OCI-LY7 (cell line): ENCODE measurements at regions of chr6 and their contacts with region 1.

Region 1: DNA sequence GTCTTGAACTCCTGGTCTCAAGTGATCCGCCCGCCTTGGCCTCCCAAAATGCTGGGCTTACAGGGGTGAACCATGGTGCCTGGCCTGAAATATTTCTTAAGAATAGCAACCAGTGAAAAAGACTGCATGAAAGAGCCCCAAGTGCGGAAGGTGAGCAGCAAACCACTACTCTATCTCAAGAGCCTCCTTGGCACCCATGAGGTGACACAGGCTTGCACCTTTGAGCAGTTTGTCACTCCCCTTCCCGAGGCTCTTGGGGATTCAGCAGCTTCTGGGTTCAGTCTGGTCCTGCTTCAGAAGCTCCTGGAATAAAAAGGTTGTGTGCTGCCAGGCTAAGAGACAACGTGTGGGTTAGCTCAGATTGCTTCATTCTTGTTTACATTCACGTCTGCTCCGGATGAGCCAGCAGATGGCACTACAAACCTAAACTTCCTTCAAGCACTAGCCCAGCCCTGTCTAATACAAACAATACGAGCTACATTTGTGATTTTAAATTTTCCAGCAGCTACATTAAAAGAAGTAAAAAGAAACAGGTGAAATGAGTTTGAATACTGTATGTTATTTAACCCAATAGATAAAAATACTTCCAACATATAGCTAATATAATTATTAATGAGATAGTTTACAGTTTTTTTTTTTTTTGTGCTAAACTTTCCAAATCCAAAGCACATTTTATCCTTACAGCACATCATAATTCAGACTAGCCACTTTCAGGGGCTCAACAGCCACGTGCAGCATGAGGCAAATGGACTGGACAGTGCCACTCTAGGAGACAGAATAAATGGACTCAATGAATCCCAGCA is 46.2 kb downstream of the GJA10 start:
- DNase-seq: peak; percentile 71
- H3K4me3 ChIP-seq: no peak overlapping the region
- H3K27ac ChIP-seq: no peak overlapping the region
- H3K4me1 ChIP-seq: no peaks in the 10 kb centered on the region
- CTCF ChIP-seq: peak; percentile 89

Region 2: DNA sequence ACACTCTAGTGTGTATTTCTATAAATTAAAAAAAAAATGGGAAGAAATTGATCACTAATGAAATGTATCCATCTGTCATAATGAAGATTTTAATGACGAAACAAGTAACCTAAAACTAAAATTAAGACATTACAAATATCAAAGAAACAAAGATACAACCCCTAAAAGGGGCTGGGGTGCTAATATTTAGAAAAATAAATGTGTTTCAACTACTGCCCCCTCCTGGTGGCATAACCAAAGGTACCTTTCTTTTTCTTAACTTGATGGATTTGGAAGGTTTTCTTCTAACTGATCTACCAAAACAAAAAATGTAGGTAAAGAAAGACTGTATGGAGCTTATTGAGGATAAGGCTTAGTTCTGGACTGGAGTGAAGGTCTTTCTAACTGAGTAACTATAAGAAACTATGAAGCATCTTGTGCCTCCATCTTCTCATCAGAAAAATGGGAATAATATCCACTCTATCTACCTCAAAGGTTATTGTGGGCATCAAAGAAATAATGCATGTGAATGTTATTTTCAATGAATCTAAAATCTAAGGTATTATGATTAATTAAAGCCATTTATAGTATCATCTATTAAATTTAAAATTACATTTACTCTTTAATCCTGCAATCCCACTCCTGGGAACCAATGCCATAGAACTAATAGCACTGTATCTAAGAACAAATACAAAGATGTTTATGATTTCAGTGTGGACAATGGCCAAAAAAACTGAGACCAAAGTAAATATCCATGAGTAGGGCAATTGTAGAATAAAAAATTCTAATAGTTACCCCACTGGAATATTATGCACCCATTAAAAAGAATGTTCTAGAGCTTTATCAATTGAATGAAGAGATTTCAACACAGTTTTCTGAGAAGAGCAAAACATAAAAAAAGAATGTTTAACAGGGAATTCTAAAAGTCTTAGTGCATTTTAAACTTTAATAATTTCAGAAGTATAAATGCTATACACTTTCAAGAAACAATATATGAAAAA is 239.1 kb after region 1 on chr6:
- CTCF ChIA-PET with region 1: interaction called, 3 read pairs
- POLR2A ChIA-PET with region 1: interaction called, 5 read pairs
- intact Hi-C with region 1: loop called (anchors 2 kb)
- DNase-seq: no peak
- H3K4me3 ChIP-seq: no peak overlapping the region
- H3K27ac ChIP-seq: no peak overlapping the region
- H3K4me1 ChIP-seq: peaks cover 36% of the 10 kb centered on the region
- CTCF ChIP-seq: peak; percentile 83